ENCODE measurements at regions of chr3 and their contacts with region 1.

Region 1: GRCh38 chr3:190566043-190566933 is 52.4 kb downstream of the IL1RAP start:
- DNase-seq: peak; percentile 99
- H3K4me3 ChIP-seq: no peak overlapping the region
- H3K27ac ChIP-seq: peak overlapping the region; percentile 97
- H3K4me1 ChIP-seq: peaks cover 15% of the 10 kb centered on the region
- H3K27me3 ChIP-seq: no peaks in the 10 kb centered on the region
- CTCF ChIP-seq: no peak
- POLR2A ChIP-seq: no peak

Region 2: GRCh38 chr3:188881954-188882641 is 1684.2 kb before region 1 on chr3:
- CTCF ChIA-PET with region 1: no interaction called
- POLR2A ChIA-PET with region 1: no interaction called
- dilution Hi-C with region 1: no loop called
- intact Hi-C with region 1: loop called (anchors 5 kb)
- DNase-seq: peak; percentile 70
- H3K4me3 ChIP-seq: no peak overlapping the region
- H3K27ac ChIP-seq: peak overlapping the region; percentile 74
- H3K4me1 ChIP-seq: peaks cover 37% of the 10 kb centered on the region
- H3K27me3 ChIP-seq: no peaks in the 10 kb centered on the region
- CTCF ChIP-seq: no peak
- POLR2A ChIP-seq: no peak

Region 3: GRCh38 chr3:190024912-190025311 is 541.4 kb before region 1 on chr3:
- CTCF ChIA-PET with region 1: no interaction called
- POLR2A ChIA-PET with region 1: no interaction called
- dilution Hi-C with region 1: no loop called
- intact Hi-C with region 1: loop called (anchors 10 kb)
- DNase-seq: peak; percentile 76
- H3K4me3 ChIP-seq: peak overlapping the region in 1 of 3 experiments; percentile 11
- H3K27ac ChIP-seq: peak overlapping the region; percentile 90
- H3K4me1 ChIP-seq: peaks cover 12% of the 10 kb centered on the region
- H3K27me3 ChIP-seq: no peaks in the 10 kb centered on the region
- CTCF ChIP-seq: no peak
- POLR2A ChIP-seq: no peak

Region 4: DNA sequence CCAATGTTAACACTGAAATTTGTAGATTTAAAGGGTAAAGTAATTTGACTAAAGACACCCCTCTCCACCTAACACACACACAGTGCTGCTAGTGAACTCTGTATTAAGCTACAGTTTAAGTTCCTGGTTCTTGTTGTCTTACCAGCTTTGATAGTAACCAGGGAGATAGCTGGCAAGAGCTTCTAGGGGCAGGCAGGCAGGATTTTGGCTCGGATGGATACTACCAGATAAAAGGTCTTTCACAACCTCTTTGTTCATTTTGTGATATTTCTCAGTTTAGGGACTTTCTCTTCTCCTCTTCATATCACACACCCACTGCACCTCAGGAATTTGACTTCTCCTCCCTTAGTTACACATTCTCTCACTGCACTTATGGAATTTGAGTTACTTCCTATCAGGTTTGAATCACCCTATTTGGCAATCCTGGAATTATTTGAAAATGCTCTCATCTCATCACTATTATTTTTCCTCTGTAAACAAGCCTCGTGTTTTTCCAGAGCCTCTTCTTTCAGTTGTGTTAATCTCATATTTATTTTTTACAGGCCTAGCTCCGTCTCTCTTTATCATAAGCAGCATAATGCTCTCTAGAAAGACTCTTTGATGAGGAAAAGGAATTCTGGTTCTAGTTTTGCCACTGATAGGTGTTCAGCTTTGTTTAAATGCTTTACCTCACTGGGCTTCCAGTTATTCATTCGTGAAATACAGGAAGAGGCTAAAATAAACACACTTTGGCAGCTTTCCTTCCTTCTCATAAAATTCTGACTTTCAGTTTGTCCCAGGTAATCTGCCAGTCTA is 221.1 kb before region 1 on chr3:
- CTCF ChIA-PET with region 1: no interaction called
- POLR2A ChIA-PET with region 1: no interaction called
- dilution Hi-C with region 1: no loop called
- intact Hi-C with region 1: loop called (anchors 1 kb)
- DNase-seq: peak; percentile 75
- H3K4me3 ChIP-seq: peak overlapping the region in 1 of 3 experiments; percentile 48
- H3K27ac ChIP-seq: peak overlapping the region; percentile 89
- H3K4me1 ChIP-seq: peaks cover 21% of the 10 kb centered on the region
- H3K27me3 ChIP-seq: no peaks in the 10 kb centered on the region
- CTCF ChIP-seq: no peak
- POLR2A ChIP-seq: peak; percentile 40

Region 5: DNA sequence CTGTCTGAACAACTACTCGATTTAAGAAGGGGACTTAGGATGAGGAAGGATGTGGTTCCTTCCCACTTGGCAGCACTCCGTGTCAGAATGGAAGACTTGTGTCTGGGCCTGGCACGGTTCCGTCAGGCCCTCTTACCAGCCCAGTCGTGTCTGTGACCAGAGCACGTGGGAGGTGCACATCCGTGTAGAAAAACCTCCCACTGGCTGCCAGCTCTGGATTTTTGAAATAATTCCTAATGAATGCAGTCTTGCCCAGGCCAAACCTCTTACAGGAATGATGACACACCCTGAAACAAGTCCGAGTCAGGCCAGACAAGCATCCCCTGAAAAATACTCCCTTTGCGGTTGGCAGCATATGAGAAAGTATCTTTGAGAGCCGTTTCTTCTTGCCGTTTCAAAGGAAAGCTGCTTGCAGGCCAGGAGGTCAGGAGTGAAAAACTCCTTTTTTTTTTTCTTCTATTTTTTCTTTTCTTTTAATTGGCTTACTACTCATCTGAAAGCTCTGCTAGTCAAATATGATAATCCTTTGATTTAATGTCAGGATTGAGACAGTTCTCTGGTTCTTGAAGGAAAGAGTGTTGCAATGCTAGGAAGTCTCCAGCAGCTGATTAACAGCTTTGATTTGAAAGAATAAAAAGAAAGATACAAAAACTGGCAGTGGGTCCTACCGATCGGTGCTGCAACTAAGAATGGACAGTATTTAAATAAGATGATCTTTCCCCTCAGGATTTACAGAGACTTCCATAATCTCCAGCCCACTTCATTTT is 32.6 kb before region 1 on chr3:
- CTCF ChIA-PET with region 1: interaction called, 6 read pairs
- POLR2A ChIA-PET with region 1: no interaction called
- dilution Hi-C with region 1: no loop called
- intact Hi-C with region 1: loop called (anchors 1 kb)
- DNase-seq: peak; percentile 56
- H3K4me3 ChIP-seq: no peak overlapping the region
- H3K27ac ChIP-seq: no peak overlapping the region
- H3K4me1 ChIP-seq: peaks cover 11% of the 10 kb centered on the region
- H3K27me3 ChIP-seq: no peaks in the 10 kb centered on the region
- CTCF ChIP-seq: no peak
- POLR2A ChIP-seq: no peak

Region 6: DNA sequence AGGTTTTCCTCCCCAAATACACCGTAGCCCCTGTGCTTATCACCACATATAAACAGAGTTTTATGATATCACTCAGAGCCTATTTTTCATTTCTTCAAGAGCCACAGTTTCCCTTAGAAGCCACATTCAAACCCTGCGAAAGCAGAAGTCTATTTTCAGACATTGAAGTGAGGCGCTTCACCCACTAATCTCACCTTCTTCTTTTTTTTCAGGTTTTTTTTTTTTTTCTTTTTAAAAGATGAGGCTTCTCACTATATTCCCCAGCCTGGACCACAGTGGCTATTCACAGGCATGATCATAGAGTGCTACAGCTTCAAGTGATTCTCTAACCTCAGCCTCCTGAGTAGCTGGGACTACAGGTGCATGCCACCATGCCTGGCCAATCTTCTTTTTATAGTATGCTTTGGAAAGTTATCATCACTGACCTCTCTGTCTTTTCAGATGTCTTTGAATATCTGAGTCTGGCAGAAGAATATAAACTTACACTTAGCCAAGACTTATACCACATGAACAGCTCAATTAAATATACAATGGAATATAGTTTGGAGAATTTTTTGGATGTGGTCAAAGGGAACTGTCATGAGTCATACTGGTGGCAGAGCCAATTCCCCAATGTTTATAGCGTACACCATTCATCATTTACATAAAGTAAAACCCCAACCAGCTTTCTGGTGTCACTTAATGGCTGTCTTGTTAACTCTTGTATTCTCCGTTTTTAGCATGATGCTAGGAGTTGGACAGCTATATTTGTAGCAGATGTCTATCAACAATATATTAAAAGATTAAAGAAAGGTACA is 703.2 kb after region 1 on chr3:
- CTCF ChIA-PET with region 1: no interaction called
- POLR2A ChIA-PET with region 1: no interaction called
- dilution Hi-C with region 1: no loop called
- intact Hi-C with region 1: no loop called
- DNase-seq: no peak
- H3K4me3 ChIP-seq: no peak overlapping the region
- H3K27ac ChIP-seq: no peak overlapping the region
- H3K4me1 ChIP-seq: no peaks in the 10 kb centered on the region
- H3K27me3 ChIP-seq: no peaks in the 10 kb centered on the region
- CTCF ChIP-seq: no peak
- POLR2A ChIP-seq: no peak

Measured in endothelial cell of umbilical vein (primary cell).